ENCODE measurements at regions of chr10 and their contacts with region 1.

Region 1: GRCh38 chr10:97498076-97498840 is at the start of gene MMS19:
- DNase-seq: peak; percentile 100
- total RNA-seq, gene MMS19: 46.7 TPM

Region 2: DNA sequence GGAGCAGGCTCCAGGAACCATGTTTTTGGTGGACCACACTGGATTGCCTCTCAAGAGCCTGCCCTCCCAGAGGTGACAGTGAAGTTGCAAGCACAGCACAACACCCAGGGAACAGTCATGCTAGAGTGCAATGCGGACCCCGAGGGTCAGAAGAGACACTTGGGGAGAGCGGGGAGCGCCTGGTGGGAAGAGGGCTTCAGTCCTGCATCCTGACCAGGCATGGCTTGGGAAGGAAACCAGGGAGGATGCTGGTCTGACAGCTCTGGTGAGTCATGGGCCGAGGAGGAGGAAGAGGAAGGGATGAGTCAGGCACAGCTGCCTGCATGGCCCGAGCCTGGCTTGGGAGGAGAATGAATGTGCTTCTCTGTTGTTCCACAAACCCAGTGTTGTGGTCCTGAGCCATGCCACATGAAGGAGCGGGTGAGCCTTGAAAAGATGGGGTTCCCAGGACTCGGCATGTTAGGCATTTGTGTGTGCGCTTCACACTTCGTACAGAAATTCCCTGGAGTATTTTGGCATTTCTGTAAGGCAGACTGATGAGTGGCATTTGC is 44.8 kb after region 1 on chr10:
- intact Hi-C with region 1: loop called (anchors 2 kb)
- DNase-seq: peak; percentile 94

Measured in cardiac septum (tissue), 1 donor.